ENCODE measurements at regions of chr4 and their contacts with region 1.

Region 1: DNA sequence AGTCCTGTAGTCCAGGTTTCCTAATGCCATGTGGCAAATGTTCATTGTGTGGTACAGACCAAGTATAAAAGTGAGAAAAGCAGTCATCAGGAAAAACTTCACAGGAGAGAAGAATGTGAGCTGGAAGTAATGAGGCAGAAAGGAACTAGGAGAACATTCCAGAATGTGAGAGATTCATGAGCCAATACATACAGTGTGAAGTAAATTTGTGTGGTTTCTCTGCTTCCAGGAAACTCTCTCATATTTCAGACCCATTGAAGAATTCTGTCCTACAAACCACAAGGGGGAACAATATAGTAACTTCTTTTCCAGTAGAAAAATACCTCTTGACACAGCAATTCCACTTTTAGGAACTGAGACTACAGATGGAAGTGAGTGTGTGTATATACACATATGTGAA is 136.5 kb downstream of the RNF150 start:
- DNase-seq: no peak
- ATAC-seq: no peak
- H3K4me3 ChIP-seq: no peak overlapping the region
- H3K27ac ChIP-seq: no peak overlapping the region
- H3K4me1 ChIP-seq: no peaks in the 10 kb centered on the region
- H3K27me3 ChIP-seq: no peaks in the 10 kb centered on the region
- CTCF ChIP-seq: no peak
- EP300 ChIP-seq: no peak
- POLR2A ChIP-seq: no peak
- RAD21 ChIP-seq: no peak

Region 2: DNA sequence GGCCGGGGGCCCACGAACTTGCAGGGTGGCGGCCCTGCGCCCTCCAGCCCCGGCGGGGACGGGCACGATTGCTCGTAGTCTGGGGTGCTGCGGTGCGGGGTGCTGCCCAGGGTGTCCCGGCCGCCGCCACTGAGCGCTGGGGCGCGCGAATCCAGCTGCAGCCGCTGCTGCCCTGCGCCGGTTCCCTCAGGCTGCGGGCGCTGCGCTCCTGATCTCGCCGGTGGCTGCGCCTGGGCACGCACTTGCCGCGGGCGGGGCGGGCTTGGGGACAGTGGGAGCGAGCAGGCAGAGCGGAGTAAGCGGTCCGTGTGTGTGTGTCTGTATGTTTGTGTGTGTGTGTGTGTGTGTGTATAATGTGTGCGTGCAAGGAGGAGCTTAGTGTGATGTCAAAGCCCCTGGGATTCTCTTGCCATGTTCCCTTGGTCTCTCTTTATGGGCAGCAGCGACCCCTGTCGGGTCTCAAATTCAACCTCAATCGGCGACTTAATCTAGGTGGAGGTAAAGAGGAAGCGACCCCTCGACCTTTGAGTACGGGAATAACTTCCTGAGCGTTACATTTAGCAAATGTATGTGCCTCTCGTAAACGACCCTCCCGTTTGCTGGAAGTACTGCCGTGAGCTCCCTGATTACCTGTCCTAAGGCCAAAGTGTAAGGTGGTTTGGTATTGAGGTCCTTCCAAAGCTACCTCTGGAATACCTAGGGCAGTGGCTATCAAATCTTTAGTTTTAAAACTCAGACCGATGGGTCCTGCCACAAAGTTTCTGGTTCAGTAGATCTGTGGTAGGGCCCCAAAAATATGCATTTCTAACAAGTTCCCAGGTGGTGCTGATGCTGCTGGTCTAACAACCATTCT is 136.6 kb after region 1 on chr4 and contains the start of gene RNF150:
- CTCF ChIA-PET with region 1: no interaction called
- POLR2A ChIA-PET with region 1: no interaction called
- in situ Hi-C with region 1: no loop called
- intact Hi-C with region 1: loop called (anchors 10 kb)
- DNase-seq: peak; percentile 27 to 51 (median 36)
- ATAC-seq: peak; percentile 83
- H3K4me3 ChIP-seq: no peak within 1 kb of the TSS
- H3K27ac ChIP-seq: no peak within 1 kb of the TSS
- H3K4me1 ChIP-seq: peaks cover 0 to 7% of the 10 kb centered on the region in 2 experiments; a peak in 1 of 5 replicates
- H3K27me3 ChIP-seq: peaks cover 6 to 16% of the 10 kb centered on the region in 2 experiments; a peak in 3 of 5 replicates
- CTCF ChIP-seq: peak; percentile 48 to 59 (median 51); a peak in 5 of 6 replicates
- EP300 ChIP-seq: no peak
- POLR2A ChIP-seq: no peak
- RAD21 ChIP-seq: peak in 1 of 2 experiments; percentile 35; a peak in 2 of 4 replicates
- polyA plus RNA-seq, gene RNF150: not detected

Region 3: DNA sequence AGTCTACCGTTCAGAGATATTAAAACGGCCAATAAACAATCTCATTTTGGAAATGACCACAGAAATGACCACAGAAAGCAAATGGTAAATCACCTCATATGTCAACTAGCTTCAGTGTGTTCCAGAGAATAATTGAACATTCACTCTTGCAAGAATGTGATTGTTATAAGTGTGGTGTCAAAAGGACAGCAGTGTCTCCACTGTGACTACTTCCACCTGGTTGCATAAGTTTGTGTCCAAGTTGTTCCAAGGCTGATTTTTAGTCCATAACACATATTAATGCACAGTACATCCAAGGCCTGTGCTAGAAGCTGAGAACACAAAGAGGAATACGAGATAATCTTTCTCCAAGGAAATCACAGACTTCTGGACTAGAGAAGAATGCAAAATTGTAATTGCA is 173.9 kb after region 1 on chr4:
- CTCF ChIA-PET with region 1: no interaction called
- POLR2A ChIA-PET with region 1: no interaction called
- in situ Hi-C with region 1: no loop called
- intact Hi-C with region 1: no loop called
- DNase-seq: no peak
- ATAC-seq: no peak
- H3K4me3 ChIP-seq: no peak overlapping the region
- H3K27ac ChIP-seq: no peak overlapping the region
- H3K4me1 ChIP-seq: no peaks in the 10 kb centered on the region
- H3K27me3 ChIP-seq: no peaks in the 10 kb centered on the region
- CTCF ChIP-seq: no peak
- EP300 ChIP-seq: no peak
- POLR2A ChIP-seq: no peak
- RAD21 ChIP-seq: no peak

Measured in K562 (cell line).